GM18951 (cell line): ENCODE measurements at regions of chr3 and their contacts with region 1.

Region 1: DNA sequence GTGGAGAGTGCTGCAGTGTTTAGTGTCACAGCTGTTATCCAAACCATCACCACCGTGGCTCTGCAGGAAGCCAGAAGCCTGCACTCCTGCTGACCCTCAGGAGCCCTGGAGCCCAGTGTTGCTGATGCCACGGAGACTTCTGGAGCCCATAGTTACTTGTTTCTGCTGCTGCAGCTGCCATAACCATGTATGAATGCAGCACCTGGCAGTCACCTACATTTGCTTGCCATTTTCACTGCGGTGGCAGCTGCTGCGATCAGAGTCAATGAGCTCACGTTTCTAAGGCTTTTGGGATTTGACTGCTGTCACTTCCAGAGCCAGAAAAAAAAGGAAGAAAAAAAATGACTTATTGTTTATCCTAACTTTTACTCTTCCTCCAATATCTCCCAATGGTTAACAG is 299.2 kb upstream of the THRB start:
- POLR2A ChIP-seq: no peak

Region 2: DNA sequence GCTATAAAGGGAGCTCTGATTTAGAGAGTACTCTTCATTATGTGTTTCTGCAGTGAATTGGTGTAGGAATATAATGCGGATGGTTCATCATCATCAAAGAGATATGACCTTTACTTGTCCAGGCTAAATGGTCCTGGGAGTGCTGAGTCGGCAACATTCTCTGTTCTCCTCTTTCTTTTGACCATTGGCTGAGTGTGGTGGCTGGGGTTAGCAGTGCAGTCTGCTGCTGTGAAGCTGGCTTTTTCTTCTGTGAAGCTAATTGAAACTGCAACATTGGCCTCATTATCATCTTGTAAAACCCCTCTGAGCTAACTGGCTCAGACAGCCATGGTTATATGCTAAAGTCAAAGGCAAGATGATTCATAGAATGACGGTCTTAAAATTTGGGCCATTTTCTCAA is 383.0 kb before region 1 on chr3:
- in situ Hi-C with region 1: no loop called
- POLR2A ChIP-seq: no peak

Region 3: GRCh38 chr3:24591661-24592522 is 202.0 kb before region 1 on chr3:
- in situ Hi-C with region 1: no loop called
- POLR2A ChIP-seq: no peak

Region 4: GRCh38 chr3:25594007-25594502 is 800.2 kb after region 1 on chr3:
- in situ Hi-C with region 1: loop called (anchors 25 kb)
- POLR2A ChIP-seq: no peak